Ascending aorta (tissue), 2 donors: ENCODE measurements at regions of chr12 and their contacts with region 1.

Region 1: DNA sequence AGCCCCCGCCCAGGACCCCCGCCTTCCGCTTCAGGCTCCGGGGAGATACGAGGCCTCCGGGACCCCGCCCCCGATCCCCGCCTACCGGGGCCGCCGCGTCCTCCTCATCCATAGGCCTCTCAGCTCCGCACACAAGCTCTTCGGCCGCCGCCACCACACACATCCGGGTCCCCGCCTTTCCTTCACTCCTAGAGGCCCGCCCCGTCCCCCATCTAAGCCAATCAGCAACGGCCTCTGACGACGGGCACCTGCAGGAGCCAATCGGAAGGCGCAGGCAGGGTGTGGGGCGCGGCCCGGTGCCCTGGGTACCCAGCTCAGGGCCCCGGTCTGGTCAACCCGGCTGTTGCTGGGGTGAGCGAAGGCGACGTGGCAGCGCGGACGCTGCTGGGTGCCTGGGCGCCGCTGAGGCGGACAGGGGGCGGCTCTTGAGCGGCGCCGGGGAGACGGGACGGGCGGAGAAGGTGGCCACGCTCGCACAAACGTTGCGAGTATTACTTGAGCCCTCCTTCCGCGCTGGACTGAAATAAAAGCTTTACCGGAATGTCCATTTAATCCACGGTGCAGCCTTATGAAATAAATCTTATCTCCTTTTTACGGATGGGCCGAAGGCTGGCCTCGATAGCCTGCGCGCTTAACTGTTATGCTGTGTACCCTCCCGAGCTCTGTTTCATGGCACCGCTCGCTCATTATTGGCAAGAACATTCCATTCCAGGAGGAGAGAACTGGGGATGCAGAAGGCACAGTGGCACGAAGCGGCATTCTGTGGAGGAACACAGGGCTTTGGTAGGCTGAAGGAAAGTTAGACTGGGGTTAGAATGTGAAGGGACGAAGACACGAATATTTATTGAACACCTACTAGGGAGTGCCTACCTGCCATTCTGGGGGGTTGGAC is at the start of gene SPRYD3:
- DNase-seq: peak; percentile 93 to 99
- H3K4me3 ChIP-seq: peak within 1 kb of the TSS; percentile 58 to 70
- H3K27ac ChIP-seq: peak within 1 kb of the TSS; percentile 87 to 97
- H3K4me1 ChIP-seq: peaks cover 6 to 7% of the 10 kb centered on the region in 2 donors
- H3K27me3 ChIP-seq: no peaks in the 10 kb centered on the region
- CTCF ChIP-seq: peak in 1 of 3 experiments; percentile 4
- total RNA-seq, gene SPRYD3: 48.6 TPM

Region 2: GRCh38 chr12:52650520-52651081 is 428.9 kb before region 1 on chr12:
- intact Hi-C with region 1: no loop called
- DNase-seq: peak in 1 of 2 donors; percentile 19
- H3K4me3 ChIP-seq: no peak overlapping the region
- H3K27ac ChIP-seq: no peak overlapping the region
- H3K4me1 ChIP-seq: no peaks in the 10 kb centered on the region
- H3K27me3 ChIP-seq: no peaks in the 10 kb centered on the region
- CTCF ChIP-seq: no peak

Region 3: GRCh38 chr12:53005986-53006809 is 73.3 kb before region 1 on chr12 and contains the start of gene EIF4B:
- intact Hi-C with region 1: loop called (anchors 1 kb)
- DNase-seq: peak; percentile 98 to 100
- H3K4me3 ChIP-seq: peak within 1 kb of the TSS; percentile 84 to 89
- H3K27ac ChIP-seq: peak within 1 kb of the TSS; percentile 79 to 87
- H3K4me1 ChIP-seq: peaks cover 14 to 28% of the 10 kb centered on the region in 2 donors
- H3K27me3 ChIP-seq: no peaks in the 10 kb centered on the region
- CTCF ChIP-seq: no peak
- total RNA-seq, gene EIF4B: 181 TPM

Region 4: DNA sequence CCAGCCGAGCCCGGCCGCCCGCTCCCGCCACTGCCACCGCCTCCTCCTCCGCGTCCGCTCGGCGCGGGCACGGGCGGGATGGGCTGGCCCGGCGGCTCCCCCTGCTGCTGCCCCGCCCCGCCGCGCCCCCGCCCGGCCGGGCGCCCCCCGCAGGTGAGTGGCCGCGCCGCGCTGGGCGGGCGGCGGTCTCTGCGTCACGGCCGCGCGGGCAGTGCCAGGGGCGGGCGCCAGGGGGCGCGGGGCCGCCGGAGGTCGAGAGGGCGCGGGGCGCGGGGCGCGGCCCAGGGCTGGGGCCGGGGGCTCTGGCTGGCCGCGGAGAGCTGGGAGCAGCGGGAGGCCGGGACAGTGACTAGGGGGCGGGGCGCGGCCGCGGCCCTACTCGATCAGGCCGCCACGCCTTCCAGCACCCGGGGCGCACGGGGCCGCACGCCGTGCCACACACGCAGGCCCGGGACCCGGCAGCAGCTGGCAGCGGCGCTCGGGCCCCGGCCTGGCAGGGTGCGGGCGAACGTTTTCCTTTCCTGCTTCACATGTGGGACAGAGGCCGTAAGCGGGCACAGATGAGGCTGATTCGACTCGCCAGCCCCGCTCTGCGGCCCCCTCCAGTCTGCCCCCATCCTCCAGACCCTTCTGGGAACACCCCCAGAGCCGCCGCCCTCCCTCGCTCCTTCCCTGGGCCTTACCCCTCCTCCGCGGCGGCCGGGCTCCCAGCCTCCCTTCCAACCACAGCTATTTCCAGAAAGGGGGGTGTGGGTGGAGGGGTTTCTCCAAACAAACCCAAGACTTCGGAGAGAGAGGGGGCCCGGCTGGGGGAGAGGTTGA is 32.0 kb before region 1 on chr12:
- intact Hi-C with region 1: loop called (anchors 1 kb)
- DNase-seq: peak in 1 of 2 donors; percentile 92
- H3K4me3 ChIP-seq: peak overlapping the region; percentile 91 to 93
- H3K27ac ChIP-seq: peak overlapping the region; percentile 99
- H3K4me1 ChIP-seq: peaks cover 13 to 46% of the 10 kb centered on the region in 2 donors
- H3K27me3 ChIP-seq: no peaks in the 10 kb centered on the region
- CTCF ChIP-seq: peak in 1 of 3 experiments; percentile 77

Region 5: GRCh38 chr12:53115112-53115890 is 35.8 kb after region 1 on chr12:
- intact Hi-C with region 1: no loop called
- DNase-seq: no peak
- H3K4me3 ChIP-seq: no peak overlapping the region
- H3K27ac ChIP-seq: peak overlapping the region; percentile 90 to 95
- H3K4me1 ChIP-seq: peaks cover 6 to 28% of the 10 kb centered on the region in 2 donors
- H3K27me3 ChIP-seq: no peaks in the 10 kb centered on the region
- CTCF ChIP-seq: no peak